Activated CD4-positive, alpha-beta memory T cell treated with anti-CD3 and anti-CD28 coated beads, Interleukin-2, amount 10 ng/mL, durations not matched to agents 7 days and 5 days (primary cell): ENCODE measurements at regions of chr1 and their contacts with region 1.

Region 1: DNA sequence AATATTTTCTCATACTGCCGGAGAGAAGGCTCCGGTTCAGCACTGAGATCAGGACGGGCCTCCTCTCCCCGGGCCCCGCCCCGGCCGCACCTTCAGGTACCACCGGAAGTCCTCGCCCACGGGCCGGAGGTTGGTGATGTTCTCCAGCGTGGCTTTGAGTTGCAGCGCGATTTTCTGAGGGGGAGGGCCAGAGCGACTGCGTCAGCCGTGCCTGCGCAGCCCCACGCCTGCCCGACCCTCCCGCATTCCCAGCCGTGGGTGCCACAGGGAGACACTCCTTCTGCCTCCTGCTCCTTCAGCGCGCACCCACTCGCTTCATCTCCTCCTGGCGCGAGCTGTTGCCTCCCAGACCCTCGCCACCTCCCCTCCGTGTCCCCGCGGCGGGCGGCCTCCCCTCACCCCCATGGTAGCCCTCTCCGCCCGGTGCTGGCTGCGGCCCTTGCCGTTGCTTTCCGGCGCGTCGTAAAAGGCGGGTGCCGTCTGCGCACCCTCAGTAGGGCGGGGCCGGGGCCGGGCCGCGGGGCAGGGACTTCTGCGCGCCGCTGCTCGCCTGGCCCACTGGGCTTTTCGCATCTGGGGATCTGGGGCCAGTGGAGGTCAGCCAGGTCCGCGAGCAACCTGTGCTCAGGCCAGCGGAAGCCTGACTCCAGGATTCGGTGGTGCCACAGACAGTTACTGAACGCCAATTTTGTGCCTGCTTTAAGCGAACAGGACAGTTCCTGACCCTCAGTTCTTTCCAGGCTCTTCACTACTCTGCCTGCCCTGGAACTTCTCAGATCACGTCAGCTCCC is at the start of gene CZIB:
- DNase-seq: peak; percentile 94
- H3K4me3 Mint-ChIP-seq: peak within 1 kb of the TSS; percentile 89
- H3K27ac Mint-ChIP-seq: peak within 1 kb of the TSS; percentile 92
- H3K4me1 Mint-ChIP-seq: peaks cover 29% of the 10 kb centered on the region
- H3K27me3 Mint-ChIP-seq: no peaks in the 10 kb centered on the region
- total RNA-seq, gene CZIB: 38.2 to 41.3 TPM

Region 2: GRCh38 chr1:53196485-53197270 is 23.7 kb before region 1 on chr1 and contains the start of gene CPT2:
- CTCF ChIA-PET with region 1: interaction called, 3 read pairs
- POLR2A ChIA-PET with region 1: interaction called, 17 read pairs
- DNase-seq: peak; percentile 96
- H3K4me3 Mint-ChIP-seq: peak within 1 kb of the TSS; percentile 98
- H3K27ac Mint-ChIP-seq: peak within 1 kb of the TSS; percentile 97
- H3K4me1 Mint-ChIP-seq: peaks cover 26% of the 10 kb centered on the region
- H3K27me3 Mint-ChIP-seq: no peaks in the 10 kb centered on the region
- total RNA-seq, gene CPT2: 13.9 to 14.9 TPM

Region 3: GRCh38 chr1:53238197-53239155 is 18.1 kb after region 1 on chr1 and contains the start of gene MAGOH:
- CTCF ChIA-PET with region 1: no interaction called
- POLR2A ChIA-PET with region 1: interaction called, 38 read pairs
- DNase-seq: peak; percentile 96
- H3K4me3 Mint-ChIP-seq: peak within 1 kb of the TSS; percentile 94
- H3K27ac Mint-ChIP-seq: peak within 1 kb of the TSS; percentile 92
- H3K4me1 Mint-ChIP-seq: peaks cover 32% of the 10 kb centered on the region
- H3K27me3 Mint-ChIP-seq: no peaks in the 10 kb centered on the region
- total RNA-seq, gene MAGOH: 65.3 to 65.9 TPM